ENCODE measurements at regions of chr11 and their contacts with region 1.

Region 1: GRCh38 chr11:36051235-36052144 is 107.6 kb downstream of the LDLRAD3 start:
- DNase-seq: no peak
- H3K4me3 ChIP-seq: no peak overlapping the region
- H3K27ac ChIP-seq: no peak overlapping the region
- H3K4me1 ChIP-seq: no peaks in the 10 kb centered on the region
- H3K27me3 ChIP-seq: no peaks in the 10 kb centered on the region
- CTCF ChIP-seq: no peak
- POLR2A ChIP-seq: no peak

Region 2: DNA sequence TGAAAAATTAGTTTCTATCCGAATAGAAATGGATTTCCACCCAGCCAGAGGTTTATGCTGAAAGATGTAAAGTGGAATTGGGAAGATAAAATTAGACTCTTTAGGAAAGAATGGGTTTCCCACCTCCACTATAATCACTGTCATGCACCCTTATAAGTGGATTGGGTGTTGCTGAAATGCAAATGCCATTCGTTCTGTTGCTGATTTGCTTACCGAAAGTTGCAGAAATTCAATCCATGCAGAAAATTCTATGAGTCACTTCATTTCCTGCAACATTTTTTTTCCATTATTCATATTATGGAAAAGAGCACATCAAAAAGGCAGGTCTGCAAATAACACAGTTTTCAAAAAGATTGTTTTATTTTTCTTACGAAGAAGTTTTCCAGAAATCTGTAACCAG is 42.0 kb before region 1 on chr11:
- intact Hi-C with region 1: loop called (anchors 1 kb)
- DNase-seq: no peak
- H3K4me3 ChIP-seq: no peak overlapping the region
- H3K27ac ChIP-seq: peak overlapping the region in 1 of 2 donors; percentile 58
- H3K4me1 ChIP-seq: peaks cover 0 to 15% of the 10 kb centered on the region in 2 donors
- H3K27me3 ChIP-seq: no peaks in the 10 kb centered on the region
- CTCF ChIP-seq: no peak
- POLR2A ChIP-seq: no peak